Sciatic nerve (tissue), 2 donors: ENCODE measurements at regions of chr20 and their contacts with region 1.

Region 1: GRCh38 chr20:13862245-13862644 is 77.4 kb downstream of the NDUFAF5 start:
- DNase-seq: no peak
- ATAC-seq: no peak

Region 2: GRCh38 chr20:13825465-13825864 is 36.8 kb before region 1 on chr20:
- intact Hi-C with region 1: loop called (anchors 1 kb)
- DNase-seq: no peak
- ATAC-seq: no peak